ENCODE measurements at regions of chr4 and their contacts with region 1.

Region 1: GRCh38 chr4:181105487-181105886 is 1137.7 kb upstream of the TENM3 start:
- DNase-seq: no peak
- H3K4me3 ChIP-seq: no peak overlapping the region
- H3K27ac ChIP-seq: no peak overlapping the region
- H3K4me1 ChIP-seq: no peaks in the 10 kb centered on the region
- H3K27me3 ChIP-seq: no peaks in the 10 kb centered on the region
- CTCF ChIP-seq: no peak

Region 2: DNA sequence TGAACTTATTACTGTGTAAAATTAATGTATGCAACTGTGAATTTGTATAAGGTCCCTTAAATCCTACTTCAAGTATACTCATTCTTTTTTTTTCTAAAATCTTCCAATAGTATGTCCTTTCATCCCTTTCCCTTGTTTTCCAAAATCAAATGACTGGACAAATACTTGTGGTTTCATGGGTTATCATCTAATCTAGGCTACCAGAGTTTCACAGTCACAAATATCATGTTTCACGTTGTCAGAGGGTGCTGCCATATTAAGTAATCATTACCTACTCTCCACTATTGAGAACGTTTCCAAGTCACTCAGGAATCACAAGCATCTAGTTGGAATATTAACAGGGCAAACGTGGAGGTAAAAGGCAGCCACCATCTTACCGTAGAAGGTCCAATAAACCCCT is 97.3 kb before region 1 on chr4:
- CTCF ChIA-PET with region 1: no interaction called
- POLR2A ChIA-PET with region 1: no interaction called
- intact Hi-C with region 1: no loop called
- DNase-seq: no peak
- H3K4me3 ChIP-seq: no peak overlapping the region
- H3K27ac ChIP-seq: no peak overlapping the region
- H3K4me1 ChIP-seq: no peaks in the 10 kb centered on the region
- H3K27me3 ChIP-seq: no peaks in the 10 kb centered on the region
- CTCF ChIP-seq: no peak

Region 3: DNA sequence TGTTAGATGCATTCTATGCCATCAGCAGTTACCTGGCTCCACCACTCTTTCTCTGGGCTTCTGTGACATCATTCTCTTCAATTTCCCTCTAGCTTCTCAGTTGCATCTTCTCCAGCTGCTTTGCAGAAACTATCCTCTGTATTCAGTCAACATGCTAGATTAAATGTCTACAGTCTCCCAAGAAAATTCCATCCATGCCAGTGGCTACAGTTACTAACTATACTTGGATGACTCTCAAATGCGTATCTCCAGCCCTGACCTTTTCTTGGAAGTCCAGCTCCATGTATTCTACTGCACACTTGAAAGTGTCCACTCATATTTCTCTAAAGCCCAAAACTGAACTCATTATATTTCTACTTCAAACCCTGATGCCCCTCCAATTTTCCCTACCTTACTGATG is 905.4 kb after region 1 on chr4:
- CTCF ChIA-PET with region 1: no interaction called
- POLR2A ChIA-PET with region 1: no interaction called
- intact Hi-C with region 1: loop called (anchors 5 kb)
- DNase-seq: no peak
- H3K4me3 ChIP-seq: no peak overlapping the region
- H3K27ac ChIP-seq: no peak overlapping the region
- H3K4me1 ChIP-seq: no peaks in the 10 kb centered on the region
- H3K27me3 ChIP-seq: no peaks in the 10 kb centered on the region
- CTCF ChIP-seq: no peak